Activated CD4-positive, alpha-beta T cell treated with anti-CD3 and anti-CD28 coated beads, Interleukin-2, amount 10 ng/mL, durations not matched to agents 24 days and 14 days (primary cell): ENCODE measurements at regions of chr2 and their contacts with region 1.

Region 1: DNA sequence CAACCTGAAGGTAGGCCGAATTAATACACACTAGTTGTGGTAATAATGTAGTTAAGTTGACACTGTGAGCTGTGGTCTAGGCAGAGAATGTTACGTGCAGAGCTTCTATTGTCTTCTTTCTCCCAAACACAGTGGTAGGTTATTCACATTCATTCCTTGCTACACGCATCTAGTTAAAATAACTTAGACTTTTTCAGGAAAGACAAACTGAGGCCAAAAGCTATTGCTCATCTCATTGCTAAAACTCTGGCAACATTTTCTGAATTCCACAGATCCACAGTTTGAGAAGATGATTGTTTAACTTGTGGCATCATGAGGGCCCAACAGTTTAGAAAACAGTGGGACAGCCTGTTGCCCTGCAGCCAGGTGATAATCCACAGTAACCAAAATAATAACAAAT is 850.4 kb upstream of the FSHR start:
- DNase-seq: no peak
- H3K4me3 Mint-ChIP-seq: no peak overlapping the region
- H3K27ac Mint-ChIP-seq: no peak overlapping the region
- H3K4me1 Mint-ChIP-seq: no peaks in the 10 kb centered on the region
- H3K27me3 Mint-ChIP-seq: no peaks in the 10 kb centered on the region

Region 2: GRCh38 chr2:49770919-49771318 is 233.7 kb before region 1 on chr2:
- intact Hi-C with region 1: no loop called
- DNase-seq: peak; percentile 55
- H3K4me3 Mint-ChIP-seq: no peak overlapping the region
- H3K27ac Mint-ChIP-seq: no peak overlapping the region
- H3K4me1 Mint-ChIP-seq: no peaks in the 10 kb centered on the region
- H3K27me3 Mint-ChIP-seq: no peaks in the 10 kb centered on the region

Region 3: GRCh38 chr2:50059462-50059861 is 54.8 kb after region 1 on chr2:
- intact Hi-C with region 1: loop called (anchors 2 kb)
- DNase-seq: no peak
- H3K4me3 Mint-ChIP-seq: no peak overlapping the region
- H3K27ac Mint-ChIP-seq: no peak overlapping the region
- H3K4me1 Mint-ChIP-seq: no peaks in the 10 kb centered on the region
- H3K27me3 Mint-ChIP-seq: no peaks in the 10 kb centered on the region

Region 4: DNA sequence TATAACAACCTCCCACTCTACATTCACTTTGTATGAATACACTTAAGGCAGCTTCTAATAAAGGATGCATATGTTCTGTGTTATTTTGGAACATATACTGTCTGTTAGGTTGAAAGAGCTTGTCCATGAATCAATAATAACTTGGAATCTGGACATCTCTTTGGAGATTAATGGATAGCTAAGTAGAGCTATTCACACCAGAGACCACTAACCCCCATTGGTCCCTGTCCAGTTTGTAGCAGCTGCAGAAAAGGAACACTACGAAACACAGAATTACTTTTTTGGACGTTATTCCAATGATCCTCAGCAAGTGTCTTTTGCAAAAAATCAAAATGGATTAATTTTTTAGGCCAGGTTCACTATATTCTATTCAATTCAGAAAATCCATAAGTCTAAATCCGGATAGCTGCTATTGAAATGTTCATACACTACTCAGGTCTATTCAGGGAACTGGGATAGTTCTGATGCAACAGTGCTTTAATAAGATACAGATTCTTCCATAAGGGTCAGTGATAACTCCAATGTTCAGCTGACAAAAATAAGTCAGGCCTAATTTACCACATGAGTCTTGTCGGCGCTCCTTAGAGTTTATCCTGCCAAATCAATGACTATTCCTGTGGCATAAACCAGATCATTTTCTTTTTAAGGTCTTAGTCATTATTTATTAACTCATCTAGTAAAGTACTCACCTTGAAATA is 983.1 kb after region 1 on chr2:
- intact Hi-C with region 1: no loop called
- DNase-seq: no peak
- H3K4me3 Mint-ChIP-seq: no peak overlapping the region
- H3K27ac Mint-ChIP-seq: no peak overlapping the region
- H3K4me1 Mint-ChIP-seq: no peaks in the 10 kb centered on the region
- H3K27me3 Mint-ChIP-seq: no peaks in the 10 kb centered on the region